ENCODE measurements at regions of chr6 and their contacts with region 1.

Region 1: DNA sequence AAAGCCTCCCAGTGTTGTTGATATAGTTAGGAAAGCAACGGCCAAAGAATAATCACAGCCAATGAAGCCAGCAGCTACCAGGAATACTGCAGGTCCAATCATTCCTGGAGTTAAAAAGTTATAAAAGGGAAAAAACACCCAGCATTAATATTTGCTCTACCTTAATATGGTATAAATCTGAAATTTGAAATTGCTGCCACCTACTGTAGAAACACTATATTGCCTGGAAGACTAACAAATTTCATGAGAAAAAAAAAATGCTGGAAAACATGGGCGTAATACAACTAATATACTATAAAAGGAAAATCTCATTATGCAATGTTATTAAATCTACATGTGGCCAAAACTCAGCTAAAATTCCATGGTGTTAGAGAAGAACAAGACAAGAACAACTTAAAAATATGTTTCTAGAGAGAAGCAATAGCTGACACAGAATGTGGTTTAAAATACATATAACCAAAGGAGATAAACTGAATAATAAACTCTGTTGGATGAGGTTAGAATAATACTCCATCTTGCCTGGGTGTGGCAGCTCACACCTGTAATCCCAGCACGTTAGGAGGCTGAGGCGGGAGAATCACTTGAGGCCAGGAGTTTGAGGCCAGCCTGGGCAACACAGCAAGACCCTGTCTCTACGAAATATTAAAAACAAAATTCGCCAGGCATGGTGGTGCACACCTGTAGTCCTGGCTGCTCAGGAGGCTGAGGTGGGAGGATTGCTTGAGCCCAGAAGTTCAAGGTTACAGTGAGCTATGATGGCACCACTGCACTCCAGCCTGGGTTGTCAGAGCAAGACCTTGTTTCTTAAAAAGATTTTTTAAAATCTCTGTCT is 43.1 kb downstream of the SLC17A5 start:
- DNase-seq: no peak
- H3K4me3 Mint-ChIP-seq: no peak overlapping the region
- H3K27ac Mint-ChIP-seq: no peak overlapping the region
- H3K4me1 Mint-ChIP-seq: no peaks in the 10 kb centered on the region
- H3K27me3 Mint-ChIP-seq: no peaks in the 10 kb centered on the region

Region 2: GRCh38 chr6:73471686-73472290 is 138.9 kb before region 1 on chr6:
- CTCF ChIA-PET with region 1: interaction called, 14 read pairs
- POLR2A ChIA-PET with region 1: no interaction called
- intact Hi-C with region 1: no loop called
- DNase-seq: no peak
- H3K4me3 Mint-ChIP-seq: peak overlapping the region; percentile 31
- H3K27ac Mint-ChIP-seq: peak overlapping the region; percentile 56
- H3K4me1 Mint-ChIP-seq: peaks cover 22% of the 10 kb centered on the region
- H3K27me3 Mint-ChIP-seq: no peaks in the 10 kb centered on the region

Region 3: DNA sequence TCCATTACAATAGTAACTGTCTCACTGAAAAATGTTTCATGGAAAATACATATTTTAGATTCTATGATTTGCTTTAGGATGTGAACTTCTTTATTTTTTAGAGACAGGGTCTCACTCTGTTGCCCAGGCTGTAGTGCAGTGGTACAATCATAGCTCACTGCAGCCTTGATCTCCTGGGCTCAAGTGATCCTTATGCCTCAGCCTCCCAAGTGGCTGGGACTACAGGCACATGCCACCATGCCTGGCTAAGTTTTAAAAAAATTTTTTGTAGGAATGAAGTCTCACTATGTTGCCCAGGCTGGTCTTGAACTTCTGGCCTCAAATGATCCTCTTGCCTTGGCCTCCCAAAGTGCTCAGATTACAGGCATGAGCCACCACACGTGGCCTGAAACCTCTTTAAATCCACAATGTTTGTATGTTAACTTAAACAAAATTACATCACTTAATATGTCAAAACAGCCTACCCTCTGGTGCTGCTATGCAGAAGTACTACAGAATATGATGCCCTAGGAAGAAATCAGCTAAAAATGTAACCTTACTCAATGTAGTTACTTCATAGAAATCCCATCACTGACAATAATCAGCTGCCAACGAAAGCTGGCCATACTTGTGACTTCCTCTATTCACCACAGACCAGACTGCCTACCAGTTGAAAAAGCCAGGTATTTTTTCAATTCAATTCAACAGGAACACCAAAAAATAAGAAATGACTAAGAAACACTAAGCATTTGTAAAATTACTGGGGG is 107.5 kb before region 1 on chr6:
- CTCF ChIA-PET with region 1: interaction called, 14 read pairs
- POLR2A ChIA-PET with region 1: no interaction called
- intact Hi-C with region 1: no loop called
- DNase-seq: no peak
- H3K4me3 Mint-ChIP-seq: no peak overlapping the region
- H3K27ac Mint-ChIP-seq: no peak overlapping the region
- H3K4me1 Mint-ChIP-seq: no peaks in the 10 kb centered on the region
- H3K27me3 Mint-ChIP-seq: no peaks in the 10 kb centered on the region

Measured in activated CD4-positive, alpha-beta memory T cell treated with anti-CD3 and anti-CD28 coated beads for 36 hours (primary cell).